ENCODE measurements at regions of chr17 and their contacts with region 1.

Region 1: GRCh38 chr17:61144741-61145564 is 254.7 kb upstream of the TBX2 start:
- DNase-seq: no peak
- ATAC-seq: no peak
- H3K4me3 ChIP-seq: no peak overlapping the region
- H3K27ac ChIP-seq: peak overlapping the region in 1 of 4 donors; percentile 7
- H3K4me1 ChIP-seq: no peaks in the 10 kb centered on the region
- H3K27me3 ChIP-seq: no peaks in the 10 kb centered on the region
- CTCF ChIP-seq: no peak
- POLR2A ChIP-seq: no peak

Region 2: DNA sequence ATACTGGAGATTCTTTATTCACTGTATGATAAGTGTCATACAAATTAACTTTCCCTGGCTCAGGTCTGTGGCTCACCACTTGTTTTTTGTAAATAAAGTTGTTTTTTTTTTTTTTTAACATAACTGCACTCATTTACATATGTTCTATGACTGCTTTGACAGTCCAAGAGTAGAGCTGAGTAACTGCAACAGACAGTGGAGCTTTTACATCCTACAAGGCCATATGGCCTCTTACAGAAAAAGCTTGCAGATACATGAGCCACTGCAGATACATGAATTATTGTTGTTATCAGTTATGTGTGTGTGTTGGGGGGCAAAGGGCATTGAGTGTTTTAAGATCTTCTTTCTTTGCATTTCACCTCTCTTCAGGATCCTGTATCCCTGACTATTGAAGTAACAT is 155.6 kb before region 1 on chr17:
- in situ Hi-C with region 1: no loop called
- intact Hi-C with region 1: loop called (anchors 10 kb)
- DNase-seq: no peak
- ATAC-seq: no peak
- H3K4me3 ChIP-seq: no peak overlapping the region
- H3K27ac ChIP-seq: no peak overlapping the region
- H3K4me1 ChIP-seq: no peaks in the 10 kb centered on the region
- H3K27me3 ChIP-seq: no peaks in the 10 kb centered on the region
- CTCF ChIP-seq: no peak
- POLR2A ChIP-seq: no peak

Region 3: GRCh38 chr17:61097781-61098180 is 47.2 kb before region 1 on chr17:
- in situ Hi-C with region 1: loop called in 1 of 4 experiments (anchors 10 kb)
- intact Hi-C with region 1: no loop called
- DNase-seq: no peak
- ATAC-seq: no peak
- H3K4me3 ChIP-seq: no peak overlapping the region
- H3K27ac ChIP-seq: no peak overlapping the region
- H3K4me1 ChIP-seq: peaks cover 0 to 9% of the 10 kb centered on the region in 2 donors
- H3K27me3 ChIP-seq: no peaks in the 10 kb centered on the region
- CTCF ChIP-seq: no peak
- POLR2A ChIP-seq: no peak

Region 4: DNA sequence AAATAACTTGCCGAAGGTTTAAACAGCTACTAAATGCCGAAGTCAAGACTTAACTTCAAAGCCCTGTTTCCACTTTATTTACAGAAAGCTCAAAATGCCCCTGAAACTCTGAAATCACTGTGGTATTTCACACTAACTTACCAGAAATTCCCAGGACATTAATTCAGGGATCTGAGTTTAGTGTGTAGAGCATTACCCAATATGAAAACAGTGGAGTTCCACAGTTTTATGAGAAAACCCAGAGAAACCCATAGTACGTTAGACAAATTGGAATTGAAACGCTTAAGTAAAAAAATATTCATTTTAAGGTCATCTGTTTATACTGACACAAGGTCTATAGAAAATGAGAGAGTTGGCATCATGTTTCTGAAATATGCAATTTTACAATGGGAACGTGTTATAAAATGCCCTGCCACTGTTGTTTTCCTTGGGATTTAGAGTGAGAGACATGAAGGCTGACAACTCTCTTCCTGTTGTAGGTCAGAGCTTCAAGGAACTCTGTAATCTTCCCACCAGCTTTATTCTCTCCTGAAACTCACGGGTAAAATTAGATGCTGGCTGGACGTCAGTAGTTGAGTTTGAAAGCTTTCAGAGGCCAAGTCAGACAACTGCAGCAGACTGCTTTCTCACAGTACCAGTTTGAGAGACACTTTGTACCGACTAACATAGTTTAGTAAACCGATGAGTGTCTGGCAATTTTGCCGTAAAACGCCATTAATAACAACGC is 115.3 kb after region 1 on chr17:
- in situ Hi-C with region 1: no loop called
- intact Hi-C with region 1: no loop called
- DNase-seq: peak; percentile 35 to 41
- ATAC-seq: peak; percentile 98 to 99
- H3K4me3 ChIP-seq: no peak overlapping the region
- H3K27ac ChIP-seq: peak overlapping the region; percentile 63 to 75 (median 68)
- H3K4me1 ChIP-seq: peaks cover 27 to 34% of the 10 kb centered on the region in 2 donors
- H3K27me3 ChIP-seq: no peaks in the 10 kb centered on the region
- CTCF ChIP-seq: no peak
- POLR2A ChIP-seq: no peak

Measured in gastrocnemius medialis (tissue), 4 donors.